Upper lobe of right lung (tissue), 1 donor: ENCODE measurements at regions of chr1 and their contacts with region 1.

Region 1: GRCh38 chr1:156692925-156693847 is 12.2 kb downstream of the CRABP2 start:
- DNase-seq: no peak
- ATAC-seq: peak; percentile 62
- H3K4me3 ChIP-seq: no peak overlapping the region
- H3K27ac ChIP-seq: no peak overlapping the region
- H3K4me1 ChIP-seq: peaks cover 10% of the 10 kb centered on the region
- H3K27me3 ChIP-seq: peaks cover 34% of the 10 kb centered on the region
- CTCF ChIP-seq: no peak

Region 2: DNA sequence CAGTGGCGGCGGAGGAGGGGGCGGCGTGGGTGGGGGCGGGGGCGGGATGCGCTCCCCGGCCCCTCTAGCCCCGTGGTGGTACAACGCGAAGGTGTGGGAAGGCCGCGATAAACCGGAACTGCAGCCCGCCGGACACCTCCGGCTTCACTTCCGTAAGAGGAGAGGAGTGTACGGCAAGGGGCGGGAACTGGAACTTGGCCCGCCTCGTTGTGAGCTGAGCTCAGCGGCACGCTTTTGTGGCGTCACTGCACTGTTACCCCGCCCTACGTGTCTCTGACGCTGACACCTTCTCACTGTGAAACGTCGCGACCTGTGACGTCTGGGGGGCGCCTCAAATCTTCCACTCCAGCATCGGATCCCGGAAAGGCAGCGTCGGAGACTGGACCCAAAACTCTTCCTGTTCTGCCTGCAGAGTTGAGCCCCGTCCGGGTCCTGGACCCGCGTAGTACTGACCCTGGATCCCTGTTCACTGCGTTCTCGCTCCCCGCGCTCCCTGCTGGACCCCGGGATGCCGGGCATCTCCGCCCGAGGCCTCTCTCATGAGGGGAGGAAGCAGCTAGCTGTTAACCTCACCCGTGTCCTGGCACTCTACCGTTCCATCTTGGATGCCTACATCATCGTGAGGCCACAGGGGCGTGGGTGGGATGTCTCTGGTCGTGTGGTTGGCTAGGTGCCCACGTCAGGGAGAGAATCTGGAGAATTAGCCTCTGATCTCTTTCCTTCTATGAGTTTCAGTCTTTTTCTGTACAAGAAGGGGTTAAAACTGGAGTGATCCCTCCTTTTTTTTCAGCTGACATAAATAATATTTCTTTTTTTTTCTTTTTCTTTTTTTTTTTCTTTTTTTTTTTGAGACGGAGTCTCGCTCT is 35.6 kb after region 1 on chr1 and contains the start of gene ISG20L2:
- intact Hi-C with region 1: loop called (anchors 5 kb)
- DNase-seq: peak; percentile 98
- ATAC-seq: peak; percentile 95
- H3K4me3 ChIP-seq: peak within 1 kb of the TSS; percentile 79
- H3K27ac ChIP-seq: peak within 1 kb of the TSS; percentile 96
- H3K4me1 ChIP-seq: peaks cover 39% of the 10 kb centered on the region
- H3K27me3 ChIP-seq: no peaks in the 10 kb centered on the region
- CTCF ChIP-seq: no peak
- total RNA-seq, gene ISG20L2: 28.3 TPM

Region 3: GRCh38 chr1:156876281-156876680 is 183.1 kb after region 1 on chr1:
- intact Hi-C with region 1: no loop called
- DNase-seq: no peak
- ATAC-seq: peak; percentile 7
- H3K4me3 ChIP-seq: no peak overlapping the region
- H3K27ac ChIP-seq: no peak overlapping the region
- H3K4me1 ChIP-seq: no peaks in the 10 kb centered on the region
- H3K27me3 ChIP-seq: peaks cover 5% of the 10 kb centered on the region
- CTCF ChIP-seq: no peak